Activated CD4-positive, alpha-beta memory T cell treated with anti-CD3 and anti-CD28 coated beads for 36 hours (primary cell): ENCODE measurements at regions of chr3 and their contacts with region 1.

Region 1: GRCh38 chr3:177597311-177598096 is 400.2 kb upstream of the TBL1XR1 start:
- DNase-seq: peak; percentile 56
- H3K4me3 Mint-ChIP-seq: peak overlapping the region; percentile 47
- H3K27ac Mint-ChIP-seq: peak overlapping the region; percentile 88
- H3K4me1 Mint-ChIP-seq: peaks cover 75% of the 10 kb centered on the region
- H3K27me3 Mint-ChIP-seq: no peaks in the 10 kb centered on the region

Region 2: DNA sequence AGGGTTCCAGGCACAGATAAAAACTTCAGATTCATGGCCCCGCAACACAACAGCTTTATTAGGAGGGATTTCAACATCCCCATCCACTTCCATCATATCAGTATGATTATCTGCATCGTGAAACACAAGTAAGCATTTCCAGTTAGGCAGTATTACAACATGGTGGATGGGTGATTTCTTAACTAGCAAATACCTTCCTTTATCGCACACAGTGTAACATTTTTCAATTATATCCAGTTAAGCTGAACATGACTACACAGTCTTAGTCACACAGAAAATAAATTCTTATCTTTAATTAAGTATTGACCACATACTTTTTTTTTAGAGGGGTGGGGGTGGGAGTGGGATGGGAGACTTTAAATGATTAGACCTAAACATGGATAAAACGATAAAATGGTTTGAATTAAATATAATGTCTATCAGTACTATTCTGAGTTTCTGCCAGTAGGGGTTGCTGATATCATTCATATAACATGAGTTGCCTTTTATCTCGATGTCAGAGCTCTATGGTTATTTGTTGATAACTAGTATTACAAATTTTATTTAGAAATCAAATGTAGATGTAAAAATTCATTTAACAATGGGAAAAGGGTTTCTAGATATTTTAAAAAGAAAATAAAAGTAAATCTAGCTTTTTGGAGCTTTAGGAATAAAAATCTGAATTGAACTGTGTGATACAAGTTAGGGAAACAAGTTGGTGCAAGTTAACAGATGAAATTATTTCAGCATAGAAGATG is 546.8 kb before region 1 on chr3:
- CTCF ChIA-PET with region 1: no interaction called
- POLR2A ChIA-PET with region 1: no interaction called
- intact Hi-C with region 1: loop called (anchors 10 kb)
- DNase-seq: no peak
- H3K4me3 Mint-ChIP-seq: no peak overlapping the region
- H3K27ac Mint-ChIP-seq: no peak overlapping the region
- H3K4me1 Mint-ChIP-seq: peaks cover 12% of the 10 kb centered on the region
- H3K27me3 Mint-ChIP-seq: no peaks in the 10 kb centered on the region

Region 3: DNA sequence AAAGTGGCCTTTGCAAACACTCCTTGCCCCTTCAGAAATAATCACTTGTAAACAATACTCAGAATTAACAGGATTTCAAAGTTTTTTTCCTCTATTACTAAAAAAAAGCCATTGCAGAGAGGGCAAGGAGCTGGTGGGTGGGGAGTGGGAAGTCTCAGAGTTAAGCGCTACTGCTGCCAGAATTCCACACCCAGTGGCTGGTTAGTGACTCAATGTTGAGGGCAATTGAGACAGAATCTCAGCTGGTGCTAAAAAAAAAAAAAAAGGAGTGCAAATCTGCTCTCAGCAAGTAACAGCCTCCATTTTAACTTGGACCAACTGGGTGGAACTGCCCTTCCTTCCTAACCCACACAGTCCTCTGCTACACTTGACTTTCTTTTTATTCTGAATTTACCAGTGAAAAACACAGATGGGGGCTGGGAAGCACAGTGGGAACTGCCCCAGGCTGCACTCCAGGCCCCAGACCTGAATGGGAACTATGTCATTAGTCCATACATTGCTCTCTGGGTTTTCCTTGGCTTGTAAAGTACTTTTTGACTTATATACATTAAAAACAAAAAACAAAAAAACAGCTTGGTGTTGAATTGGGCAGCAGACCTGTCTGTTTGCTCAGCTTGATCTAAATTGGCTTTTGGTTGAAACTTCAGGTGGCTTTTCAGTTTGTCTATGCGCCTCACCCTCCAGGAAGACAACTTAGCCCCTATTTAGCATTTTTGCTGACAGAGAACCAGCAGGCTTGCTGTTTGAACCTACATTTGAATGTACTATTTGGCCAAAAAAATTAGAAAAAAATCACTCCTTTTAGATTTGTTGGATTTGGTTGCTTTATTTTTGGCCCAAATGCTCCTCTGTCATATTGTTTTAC is 42.4 kb before region 1 on chr3:
- CTCF ChIA-PET with region 1: no interaction called
- POLR2A ChIA-PET with region 1: no interaction called
- intact Hi-C with region 1: loop called (anchors 2 kb)
- DNase-seq: no peak
- H3K4me3 Mint-ChIP-seq: no peak overlapping the region
- H3K27ac Mint-ChIP-seq: no peak overlapping the region
- H3K4me1 Mint-ChIP-seq: peaks cover 48% of the 10 kb centered on the region
- H3K27me3 Mint-ChIP-seq: no peaks in the 10 kb centered on the region

Region 4: DNA sequence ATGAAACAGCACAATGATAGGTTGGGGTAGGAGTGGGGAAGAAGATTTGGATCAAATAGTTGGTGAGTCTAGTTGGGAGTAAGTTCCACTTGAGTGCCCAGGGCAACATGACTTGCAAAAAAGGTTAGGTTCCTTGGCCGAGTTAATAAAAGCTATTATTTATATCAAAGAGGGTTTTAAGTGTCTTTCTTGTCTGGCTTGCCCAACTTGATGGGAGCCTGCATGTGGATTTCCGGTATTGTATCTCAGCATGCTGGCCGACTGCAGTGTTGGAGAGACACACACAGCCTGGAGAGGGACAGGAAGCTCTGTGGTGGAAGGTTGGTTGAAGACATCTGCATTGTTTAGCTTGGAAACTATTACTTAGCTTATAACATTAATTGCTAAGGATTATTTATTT is 49.2 kb after region 1 on chr3:
- CTCF ChIA-PET with region 1: no interaction called
- POLR2A ChIA-PET with region 1: no interaction called
- intact Hi-C with region 1: loop called (anchors 5 kb)
- DNase-seq: peak; percentile 45
- H3K4me3 Mint-ChIP-seq: no peak overlapping the region
- H3K27ac Mint-ChIP-seq: no peak overlapping the region
- H3K4me1 Mint-ChIP-seq: peaks cover 55% of the 10 kb centered on the region
- H3K27me3 Mint-ChIP-seq: no peaks in the 10 kb centered on the region

Region 5: DNA sequence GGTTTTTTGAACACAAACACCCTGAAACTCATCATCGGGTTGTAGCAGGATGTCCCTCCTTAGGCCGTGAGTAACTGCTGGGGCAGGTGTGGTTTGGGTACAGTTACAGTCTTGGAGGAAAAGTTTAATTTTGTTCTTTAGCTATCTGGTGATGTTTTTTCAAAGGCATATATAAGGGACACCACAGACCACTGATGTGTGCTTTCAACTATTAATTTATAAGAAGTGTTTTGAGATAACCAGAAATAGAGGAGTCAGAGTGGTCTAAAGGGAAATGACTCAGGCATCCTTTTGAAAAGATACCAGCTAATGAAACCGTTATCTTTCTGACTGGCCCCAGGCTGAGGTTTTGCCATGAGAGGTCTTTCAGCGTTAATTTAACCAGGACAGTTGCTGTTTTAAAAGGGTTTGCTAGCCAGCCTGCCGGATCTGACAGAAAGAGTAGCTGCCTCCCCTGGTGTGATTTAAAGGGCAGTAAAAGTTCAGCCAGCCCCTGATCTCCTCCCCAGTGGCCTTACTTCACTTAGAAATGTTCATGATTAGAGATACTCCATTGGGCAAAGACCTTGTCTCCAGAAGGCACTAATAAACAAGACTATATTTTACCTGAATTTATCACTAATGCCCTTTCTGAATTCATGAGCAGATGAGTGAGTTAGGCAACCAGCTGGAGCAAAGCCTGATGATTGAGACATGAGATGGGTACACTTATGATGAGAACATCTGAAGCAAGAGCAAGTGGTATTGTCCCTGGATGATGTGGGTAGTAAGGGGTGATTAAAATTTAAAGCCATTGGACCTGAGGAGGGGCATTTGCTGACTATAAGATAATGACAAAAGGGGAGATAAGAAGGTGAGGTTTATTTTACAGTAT is 82.3 kb after region 1 on chr3:
- CTCF ChIA-PET with region 1: no interaction called
- POLR2A ChIA-PET with region 1: no interaction called
- intact Hi-C with region 1: loop called (anchors 2 kb)
- DNase-seq: peak; percentile 64
- H3K4me3 Mint-ChIP-seq: no peak overlapping the region
- H3K27ac Mint-ChIP-seq: peak overlapping the region; percentile 69
- H3K4me1 Mint-ChIP-seq: peaks cover 21% of the 10 kb centered on the region
- H3K27me3 Mint-ChIP-seq: no peaks in the 10 kb centered on the region

Region 6: DNA sequence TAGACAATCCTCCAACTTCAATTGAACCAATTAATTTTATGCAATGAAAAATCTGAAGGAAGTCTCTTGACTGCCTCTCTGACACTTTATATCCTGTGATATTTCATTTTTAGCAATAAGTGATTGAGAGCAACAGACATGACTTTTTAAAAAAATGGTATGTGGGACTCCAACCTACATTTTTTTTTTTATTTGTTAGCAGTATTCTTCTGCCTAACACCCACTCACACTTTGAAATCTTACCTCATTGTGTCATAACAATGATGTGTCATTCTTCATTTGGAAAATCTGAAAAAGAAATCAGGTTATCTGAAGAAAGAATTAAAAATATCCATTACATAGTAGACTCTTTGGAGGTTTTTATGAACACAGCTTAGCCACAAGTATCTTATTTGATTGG is 397.5 kb after region 1 on chr3:
- CTCF ChIA-PET with region 1: no interaction called
- POLR2A ChIA-PET with region 1: no interaction called
- intact Hi-C with region 1: loop called (anchors 5 kb)
- DNase-seq: no peak
- H3K4me3 Mint-ChIP-seq: no peak overlapping the region
- H3K27ac Mint-ChIP-seq: no peak overlapping the region
- H3K4me1 Mint-ChIP-seq: peaks cover 25% of the 10 kb centered on the region
- H3K27me3 Mint-ChIP-seq: no peaks in the 10 kb centered on the region